Heart left ventricle (tissue), 16 donors: ENCODE measurements at regions of chr3 and their contacts with region 1.

Region 1: DNA sequence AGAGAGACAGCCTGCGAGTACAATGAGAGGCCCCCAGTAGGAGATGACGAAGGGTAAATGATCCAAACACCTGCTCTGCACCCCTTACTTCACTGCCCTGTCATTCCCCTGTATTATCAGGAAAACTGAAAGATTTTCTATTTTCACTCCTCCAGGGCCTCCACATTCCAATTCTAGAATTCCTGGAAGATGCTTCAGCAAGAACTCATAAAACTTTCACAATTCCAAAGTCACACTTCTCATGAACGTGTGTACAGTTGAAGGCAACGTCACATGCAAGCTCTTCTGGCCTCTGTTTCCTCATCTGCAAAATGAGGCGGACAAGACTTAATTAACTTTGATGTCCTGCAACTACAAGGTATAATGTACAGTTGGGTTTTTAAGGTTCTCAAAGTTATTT is 62.8 kb upstream of the SPATA12 start:
- DNase-seq: no peak
- ATAC-seq: no peak
- H3K4me3 ChIP-seq: no peak overlapping the region
- H3K27ac ChIP-seq: peak overlapping the region in 1 of 12 donors; percentile 76
- H3K4me1 ChIP-seq: peaks cover 0 to 22% (median 1%) of the 10 kb centered on the region in 12 donors
- H3K27me3 ChIP-seq: no peaks in the 10 kb centered on the region
- CTCF ChIP-seq: no peak
- POLR2A ChIP-seq: no peak

Region 2: DNA sequence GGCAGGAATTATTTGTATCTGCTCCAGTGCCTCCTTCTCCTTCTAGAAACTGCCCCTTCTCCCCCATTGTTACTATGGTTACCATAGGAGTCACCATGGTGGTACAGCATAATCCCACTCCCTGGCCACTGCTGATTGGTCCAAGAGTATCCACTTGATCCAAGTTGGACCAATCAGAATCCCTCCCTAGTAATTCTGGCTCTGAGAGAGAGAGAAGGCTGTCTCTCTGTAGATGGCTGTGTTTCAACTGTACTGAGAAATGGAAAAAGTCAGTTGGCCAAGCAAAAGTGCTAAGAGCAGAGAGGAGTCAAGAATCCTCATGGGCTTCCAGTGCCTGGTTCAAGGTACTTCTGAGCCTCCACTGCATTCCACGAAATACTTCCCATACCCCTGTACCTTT is 57.8 kb before region 1 on chr3:
- intact Hi-C with region 1: no loop called
- DNase-seq: no peak
- ATAC-seq: no peak
- H3K4me3 ChIP-seq: no peak overlapping the region
- H3K27ac ChIP-seq: no peak overlapping the region
- H3K4me1 ChIP-seq: no peaks in the 10 kb centered on the region
- H3K27me3 ChIP-seq: no peaks in the 10 kb centered on the region
- CTCF ChIP-seq: no peak
- POLR2A ChIP-seq: no peak

Region 3: GRCh38 chr3:57078344-57078634 is 80.6 kb after region 1 on chr3:
- intact Hi-C with region 1: loop called in 9 of 10 experiments (anchors 1 to 5 kb)
- DNase-seq: peak; percentile 41 to 74 (median 46)
- ATAC-seq: peak; percentile 24 to 61 (median 57)
- H3K4me3 ChIP-seq: peak overlapping the region; percentile 36 to 93 (median 74)
- H3K27ac ChIP-seq: peak overlapping the region in 4 of 12 donors; percentile 30 to 79 (median 43)
- H3K4me1 ChIP-seq: peaks cover 0 to 18% (median 4%) of the 10 kb centered on the region in 12 donors
- H3K27me3 ChIP-seq: peaks cover 0 to 21% (median 0%) of the 10 kb centered on the region in 9 donors
- CTCF ChIP-seq: no peak
- POLR2A ChIP-seq: no peak

Region 4: DNA sequence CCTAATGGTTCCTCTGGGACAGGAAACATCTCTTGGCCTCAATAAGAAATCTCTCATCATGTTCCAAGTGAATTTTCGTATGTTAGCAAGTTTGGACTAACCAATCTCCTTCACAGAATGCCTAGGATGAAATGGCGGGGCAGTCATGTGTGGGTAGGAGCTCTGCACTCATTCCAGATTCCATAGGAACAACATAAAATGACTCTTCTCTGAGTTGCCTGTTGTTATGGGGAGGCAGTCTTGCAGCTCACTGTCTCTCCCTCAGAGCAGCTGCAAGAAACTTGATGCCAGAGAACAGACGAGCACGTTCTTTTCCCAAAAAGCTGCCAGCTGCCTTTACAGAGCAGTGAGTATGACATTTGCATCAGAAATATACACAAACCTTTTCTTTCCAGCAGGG is 96.9 kb after region 1 on chr3:
- intact Hi-C with region 1: loop called in 1 of 10 experiments (anchors 5 kb)
- DNase-seq: no peak
- ATAC-seq: peak in 1 of 4 donors; percentile 16
- H3K4me3 ChIP-seq: peak overlapping the region in 1 of 12 donors; percentile 24
- H3K27ac ChIP-seq: peak overlapping the region in 6 of 12 donors; percentile 1 to 45 (median 30)
- H3K4me1 ChIP-seq: peaks cover 0 to 10% (median 0%) of the 10 kb centered on the region in 12 donors
- H3K27me3 ChIP-seq: no peaks in the 10 kb centered on the region
- CTCF ChIP-seq: no peak
- POLR2A ChIP-seq: no peak

Region 5: GRCh38 chr3:57221883-57222282 is 224.2 kb after region 1 on chr3:
- intact Hi-C with region 1: loop called in 8 of 10 experiments (anchors 5 to 10 kb)
- DNase-seq: no peak
- ATAC-seq: no peak
- H3K4me3 ChIP-seq: no peak overlapping the region
- H3K27ac ChIP-seq: no peak overlapping the region
- H3K4me1 ChIP-seq: peaks cover 0 to 16% (median 5%) of the 10 kb centered on the region in 12 donors
- H3K27me3 ChIP-seq: no peaks in the 10 kb centered on the region
- CTCF ChIP-seq: peak in 10 of 12 donors; percentile 9 to 53 (median 34)
- POLR2A ChIP-seq: no peak